Psoas muscle (tissue), 8 donors: ENCODE measurements at regions of chr6 and their contacts with region 1.

Region 1: DNA sequence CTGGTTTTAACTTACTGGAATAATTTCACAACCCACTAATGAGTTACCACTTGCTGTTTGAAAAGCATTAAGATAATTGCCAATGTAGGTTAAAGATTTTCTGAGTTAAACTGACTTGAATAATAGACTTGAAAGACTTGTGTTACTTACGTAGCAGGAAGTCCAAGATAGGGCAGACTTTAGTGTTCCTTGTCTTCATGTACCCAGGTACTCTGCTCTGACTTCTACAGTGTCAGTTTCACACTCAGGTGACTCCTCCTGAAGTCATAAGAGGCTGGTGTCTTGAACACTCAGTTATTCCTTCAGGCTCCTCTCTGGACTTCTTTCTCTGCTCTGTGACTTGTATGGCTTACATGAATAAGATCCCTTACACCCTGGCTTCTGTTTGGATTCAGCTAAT is 76.3 kb upstream of the SGK1 start:
- DNase-seq: no peak
- ATAC-seq: no peak
- H3K4me3 ChIP-seq: no peak overlapping the region
- H3K27ac ChIP-seq: no peak overlapping the region
- H3K4me1 ChIP-seq: peaks cover 8% of the 10 kb centered on the region
- H3K27me3 ChIP-seq: no peaks in the 10 kb centered on the region
- CTCF ChIP-seq: no peak

Region 2: GRCh38 chr6:134358320-134358719 is 35.9 kb before region 1 on chr6:
- intact Hi-C with region 1: loop called in 1 of 2 experiments (anchors 5 kb)
- DNase-seq: no peak
- ATAC-seq: no peak
- H3K4me3 ChIP-seq: no peak overlapping the region
- H3K27ac ChIP-seq: no peak overlapping the region
- H3K4me1 ChIP-seq: no peaks in the 10 kb centered on the region
- H3K27me3 ChIP-seq: no peaks in the 10 kb centered on the region
- CTCF ChIP-seq: no peak

Region 3: GRCh38 chr6:134502614-134503549 is 108.7 kb after region 1 on chr6:
- intact Hi-C with region 1: no loop called
- DNase-seq: no peak
- ATAC-seq: peak in 3 of 4 donors; percentile 27 to 72 (median 70)
- H3K4me3 ChIP-seq: no peak overlapping the region
- H3K27ac ChIP-seq: no peak overlapping the region
- H3K4me1 ChIP-seq: peaks cover 4% of the 10 kb centered on the region
- H3K27me3 ChIP-seq: peaks cover 0 to 2% (median 0%) of the 10 kb centered on the region in 3 donors
- CTCF ChIP-seq: no peak